Prostate gland (tissue), 2 donors: ENCODE measurements at regions of chr4 and their contacts with region 1.

Region 1: GRCh38 chr4:30719460-30720020 is 629 bp upstream of the PCDH7 start:
- DNase-seq: peak; percentile 69
- H3K4me3 ChIP-seq: peak overlapping the region; percentile 45 to 49
- H3K27ac ChIP-seq: peak overlapping the region; percentile 51 to 73
- H3K4me1 ChIP-seq: no peaks in the 10 kb centered on the region
- H3K27me3 ChIP-seq: no peaks in the 10 kb centered on the region
- CTCF ChIP-seq: no peak
- POLR2A ChIP-seq: no peak

Region 2: GRCh38 chr4:30208741-30209435 is 510.7 kb before region 1 on chr4:
- intact Hi-C with region 1: no loop called
- DNase-seq: no peak
- H3K4me3 ChIP-seq: no peak overlapping the region
- H3K27ac ChIP-seq: no peak overlapping the region
- H3K4me1 ChIP-seq: no peaks in the 10 kb centered on the region
- H3K27me3 ChIP-seq: no peaks in the 10 kb centered on the region
- CTCF ChIP-seq: no peak
- POLR2A ChIP-seq: no peak

Region 3: GRCh38 chr4:30863021-30863420 is 143.5 kb after region 1 on chr4:
- intact Hi-C with region 1: loop called (anchors 10 kb)
- DNase-seq: no peak
- H3K4me3 ChIP-seq: no peak overlapping the region
- H3K27ac ChIP-seq: no peak overlapping the region
- H3K4me1 ChIP-seq: no peaks in the 10 kb centered on the region
- H3K27me3 ChIP-seq: no peaks in the 10 kb centered on the region
- CTCF ChIP-seq: no peak
- POLR2A ChIP-seq: no peak